OCI-LY7 (cell line): ENCODE measurements at regions of chr20 and their contacts with region 1.

Region 1: DNA sequence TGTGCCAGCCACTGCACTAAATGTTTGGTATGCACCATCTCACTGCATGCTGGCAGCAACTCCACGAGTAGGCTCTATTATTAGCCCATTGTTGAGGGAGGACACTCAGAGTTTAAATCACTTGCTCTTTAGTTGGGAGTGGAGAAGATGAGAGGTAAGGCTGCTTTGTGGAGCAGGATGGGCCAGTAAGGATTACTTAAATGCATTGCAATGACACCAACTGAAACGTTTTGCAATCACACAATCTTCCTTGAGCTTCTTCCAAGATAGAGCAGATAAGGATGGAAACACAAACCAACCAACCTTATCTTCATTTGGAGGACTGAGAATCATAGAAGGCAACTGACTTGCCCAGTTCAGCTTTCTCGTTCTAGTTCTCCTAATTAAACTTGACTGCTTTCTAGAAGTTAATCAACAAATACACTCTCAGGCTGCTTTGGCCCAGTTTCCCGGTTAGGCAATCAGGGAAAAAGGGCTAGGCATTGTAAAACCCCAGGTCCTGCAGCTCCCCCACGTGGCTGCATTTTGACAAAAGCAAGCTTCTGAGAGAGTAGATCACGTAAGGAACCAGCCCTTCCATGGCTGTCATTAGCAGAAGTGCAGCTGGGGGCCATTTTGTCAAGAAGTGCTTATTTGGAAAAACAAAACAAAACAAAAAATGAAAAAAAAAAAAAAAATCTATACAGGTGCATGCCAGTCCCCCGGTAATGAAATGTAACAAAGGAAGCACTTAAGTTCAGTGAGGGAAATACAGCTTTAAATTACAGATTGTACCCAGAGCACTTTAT is 130.6 kb downstream of the BCAS1 start:
- DNase-seq: peak; percentile 97
- H3K4me3 ChIP-seq: peak overlapping the region; percentile 62
- H3K27ac ChIP-seq: peak overlapping the region; percentile 71
- H3K4me1 ChIP-seq: peaks cover 79% of the 10 kb centered on the region
- CTCF ChIP-seq: peak; percentile 98

Region 2: DNA sequence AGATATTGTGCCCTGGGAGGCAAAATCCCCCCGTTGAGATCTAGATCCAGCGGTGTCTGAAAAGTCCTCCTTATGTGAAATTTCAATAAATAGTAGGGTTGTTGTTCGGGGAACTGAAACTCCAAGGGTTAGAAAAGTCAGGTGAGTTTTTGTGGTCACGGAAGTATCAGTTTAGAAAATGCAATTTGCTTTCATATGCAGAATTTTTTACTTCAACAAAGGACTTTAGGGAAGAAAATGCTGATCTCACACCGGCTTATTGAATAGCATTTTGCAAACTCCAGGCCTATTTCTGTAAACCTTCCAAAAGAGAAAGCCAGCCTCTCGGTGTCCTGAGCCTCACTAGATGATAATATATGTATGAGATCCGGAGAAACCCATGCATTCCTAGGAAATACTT is 712.9 kb before region 1 on chr20:
- CTCF ChIA-PET with region 1: no interaction called
- POLR2A ChIA-PET with region 1: no interaction called
- intact Hi-C with region 1: loop called (anchors 10 kb)
- DNase-seq: peak; percentile 79
- H3K4me3 ChIP-seq: peak overlapping the region; percentile 52
- H3K27ac ChIP-seq: peak overlapping the region; percentile 80
- H3K4me1 ChIP-seq: peaks cover 26% of the 10 kb centered on the region
- CTCF ChIP-seq: 0 out of 2 replicates have a peak, but pooled peaks have one; percentile 18

Region 3: GRCh38 chr20:53578492-53579222 is 361.1 kb before region 1 on chr20:
- CTCF ChIA-PET with region 1: interaction called, 3 read pairs
- POLR2A ChIA-PET with region 1: interaction called, 6 read pairs
- intact Hi-C with region 1: loop called (anchors 1 kb)
- DNase-seq: peak; percentile 93
- H3K4me3 ChIP-seq: peak overlapping the region; percentile 68
- H3K27ac ChIP-seq: peak overlapping the region; percentile 96
- H3K4me1 ChIP-seq: peaks cover 58% of the 10 kb centered on the region
- CTCF ChIP-seq: peak; percentile 97

Region 4: GRCh38 chr20:53738039-53738944 is 201.5 kb before region 1 on chr20:
- CTCF ChIA-PET with region 1: interaction called, 3 read pairs
- POLR2A ChIA-PET with region 1: interaction called, 5 read pairs
- intact Hi-C with region 1: loop called (anchors 5 kb)
- DNase-seq: peak; percentile 48
- H3K4me3 ChIP-seq: peak overlapping the region; percentile 56
- H3K27ac ChIP-seq: peak overlapping the region; percentile 11
- H3K4me1 ChIP-seq: peaks cover 65% of the 10 kb centered on the region
- CTCF ChIP-seq: no peak

Region 5: DNA sequence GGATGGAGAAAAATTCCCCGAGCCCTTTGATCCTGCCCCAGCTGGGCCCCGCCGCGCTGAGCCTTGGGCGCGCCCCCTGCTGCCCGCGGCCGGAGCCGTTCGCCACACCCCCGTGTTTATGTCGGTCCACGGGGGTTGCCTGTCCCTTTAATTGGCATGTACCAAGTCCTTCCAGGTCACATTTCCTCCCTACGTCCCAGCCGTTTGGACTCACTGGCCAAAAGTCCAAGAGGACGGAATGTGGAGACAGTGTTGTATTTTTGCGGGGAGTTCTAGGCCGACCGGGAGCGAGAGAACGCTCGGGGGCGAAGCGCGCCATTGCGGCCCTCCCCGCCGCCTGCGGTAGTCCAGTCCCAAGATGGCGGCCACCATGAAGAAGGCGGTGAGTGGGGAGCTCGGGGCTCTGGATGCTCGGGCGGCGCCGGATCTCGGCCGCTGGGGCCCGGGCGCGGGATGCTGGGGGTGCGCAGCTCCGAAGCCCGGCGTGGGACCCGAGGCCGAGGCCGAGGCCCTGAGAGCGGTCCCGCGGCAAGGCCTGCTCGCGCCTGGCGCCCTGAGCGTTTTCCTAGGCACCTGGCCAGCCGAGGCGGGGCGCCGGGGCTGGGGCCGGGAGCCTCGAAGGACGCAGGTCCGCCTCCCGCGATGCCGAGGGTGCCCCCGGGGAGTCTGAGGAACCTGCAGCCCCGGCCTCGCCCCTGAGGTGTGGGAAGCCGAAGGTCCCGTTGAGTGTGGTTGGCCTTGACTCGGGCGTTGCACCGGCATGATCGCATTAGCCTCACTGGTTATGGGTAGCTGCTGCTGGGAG is 268.2 kb after region 1 on chr20 and contains the start of gene PFDN4:
- CTCF ChIA-PET with region 1: no interaction called
- POLR2A ChIA-PET with region 1: interaction called, 3 read pairs
- intact Hi-C with region 1: loop called (anchors 5 kb)
- DNase-seq: peak; percentile 89
- H3K4me3 ChIP-seq: peak within 1 kb of the TSS; percentile 80
- H3K27ac ChIP-seq: peak within 1 kb of the TSS; percentile 52
- H3K4me1 ChIP-seq: peaks cover 8% of the 10 kb centered on the region
- CTCF ChIP-seq: peak; percentile 93
- total RNA-seq, gene PFDN4: 40.7 and 52.5 TPM in 2 replicates